ENCODE measurements at regions of chr10 and their contacts with region 1.

Region 1: DNA sequence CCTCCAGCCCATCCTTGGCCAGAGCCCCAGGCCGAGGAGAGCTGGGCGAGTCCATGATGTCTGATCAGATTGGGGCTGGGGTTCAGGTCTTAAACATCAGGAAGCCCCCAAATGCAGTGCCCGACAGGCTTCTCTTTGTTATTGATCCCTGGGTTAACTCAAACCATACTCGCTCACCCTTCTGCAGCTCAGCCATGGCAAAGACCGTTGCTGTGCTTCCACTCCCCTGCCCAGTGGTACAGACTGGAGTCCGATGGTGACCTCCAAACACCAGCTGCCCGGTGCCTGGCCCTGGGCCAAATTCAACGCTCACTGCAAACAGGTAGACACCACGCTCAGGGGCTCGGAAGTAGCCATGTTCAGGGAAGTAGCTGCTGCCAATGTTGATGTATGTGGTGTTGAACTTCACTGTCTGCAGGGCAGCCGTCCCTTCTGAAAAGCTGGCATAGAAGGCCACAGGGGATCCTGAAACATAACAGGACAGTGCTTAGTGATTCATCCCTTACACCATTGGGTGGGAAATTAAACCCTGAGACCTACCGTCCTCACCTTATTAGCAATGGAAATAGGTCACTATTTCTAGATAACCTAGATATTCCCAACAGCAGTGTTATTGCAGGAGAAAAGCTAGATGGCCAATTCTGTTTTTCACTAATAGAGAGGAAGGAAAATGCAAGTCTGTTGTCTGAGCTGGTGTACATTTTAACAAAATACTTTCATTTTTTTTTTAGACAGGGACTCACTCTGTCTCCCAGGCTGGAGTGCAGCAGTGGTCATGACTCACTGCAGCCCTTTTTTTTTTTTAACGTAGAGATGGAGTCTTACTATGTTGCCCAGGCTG is 20.5 kb downstream of the MMRN2 start:
- DNase-seq: no peak
- H3K4me3 ChIP-seq: no peak overlapping the region
- H3K4me3 Mint-ChIP-seq: no peak overlapping the region
- H3K27ac ChIP-seq: no peak overlapping the region
- H3K27ac Mint-ChIP-seq: peak overlapping the region in 3 of 7 donors; percentile 29 to 43 (median 42)
- H3K4me1 ChIP-seq: no peaks in the 10 kb centered on the region
- H3K4me1 Mint-ChIP-seq: peaks cover 0 to 7% (median 3%) of the 10 kb centered on the region in 4 donors
- H3K27me3 ChIP-seq: no peaks in the 10 kb centered on the region
- H3K27me3 Mint-ChIP-seq: no peaks in the 10 kb centered on the region

Region 2: DNA sequence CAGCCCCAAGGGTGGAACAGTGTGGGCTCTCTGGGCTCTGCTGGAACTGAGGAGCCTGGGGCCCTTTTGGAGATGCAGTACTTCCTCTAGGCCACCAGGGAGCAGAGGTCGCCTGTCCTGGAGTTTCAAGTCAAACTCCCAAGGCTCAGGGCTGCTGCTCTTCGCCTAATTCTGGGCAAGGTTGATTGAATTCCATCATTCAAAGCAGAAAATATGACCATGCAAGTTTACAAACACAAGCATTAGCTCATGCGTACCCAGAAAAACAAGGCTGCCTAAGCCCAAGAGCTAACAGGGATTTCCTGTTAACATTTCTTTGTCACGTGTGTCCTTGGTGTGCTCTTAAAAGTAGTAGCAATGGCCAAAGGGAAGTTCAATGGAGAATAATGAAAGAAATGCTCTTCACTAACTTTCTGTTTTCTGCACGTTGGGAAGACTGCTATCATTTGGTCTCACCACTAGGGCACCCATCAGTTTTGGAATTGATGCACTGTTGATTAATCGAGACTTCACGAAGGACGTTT is 248.4 kb before region 1 on chr10:
- CTCF ChIA-PET with region 1: interaction called, 9 read pairs
- POLR2A ChIA-PET with region 1: no interaction called
- intact Hi-C with region 1: loop called (anchors 1 kb)
- DNase-seq: peak; percentile 48 to 55 (median 54)
- H3K4me3 ChIP-seq: no peak overlapping the region
- H3K4me3 Mint-ChIP-seq: peak overlapping the region in 2 of 8 donors; percentile 27 to 48
- H3K27ac ChIP-seq: no peak overlapping the region
- H3K27ac Mint-ChIP-seq: peak overlapping the region in 1 of 7 donors; percentile 6
- H3K4me1 ChIP-seq: no peaks in the 10 kb centered on the region
- H3K4me1 Mint-ChIP-seq: peaks cover 0 to 9% (median 5%) of the 10 kb centered on the region in 4 donors
- H3K27me3 ChIP-seq: no peaks in the 10 kb centered on the region
- H3K27me3 Mint-ChIP-seq: peaks cover 3 to 4% of the 10 kb centered on the region in 2 donors

Region 3: DNA sequence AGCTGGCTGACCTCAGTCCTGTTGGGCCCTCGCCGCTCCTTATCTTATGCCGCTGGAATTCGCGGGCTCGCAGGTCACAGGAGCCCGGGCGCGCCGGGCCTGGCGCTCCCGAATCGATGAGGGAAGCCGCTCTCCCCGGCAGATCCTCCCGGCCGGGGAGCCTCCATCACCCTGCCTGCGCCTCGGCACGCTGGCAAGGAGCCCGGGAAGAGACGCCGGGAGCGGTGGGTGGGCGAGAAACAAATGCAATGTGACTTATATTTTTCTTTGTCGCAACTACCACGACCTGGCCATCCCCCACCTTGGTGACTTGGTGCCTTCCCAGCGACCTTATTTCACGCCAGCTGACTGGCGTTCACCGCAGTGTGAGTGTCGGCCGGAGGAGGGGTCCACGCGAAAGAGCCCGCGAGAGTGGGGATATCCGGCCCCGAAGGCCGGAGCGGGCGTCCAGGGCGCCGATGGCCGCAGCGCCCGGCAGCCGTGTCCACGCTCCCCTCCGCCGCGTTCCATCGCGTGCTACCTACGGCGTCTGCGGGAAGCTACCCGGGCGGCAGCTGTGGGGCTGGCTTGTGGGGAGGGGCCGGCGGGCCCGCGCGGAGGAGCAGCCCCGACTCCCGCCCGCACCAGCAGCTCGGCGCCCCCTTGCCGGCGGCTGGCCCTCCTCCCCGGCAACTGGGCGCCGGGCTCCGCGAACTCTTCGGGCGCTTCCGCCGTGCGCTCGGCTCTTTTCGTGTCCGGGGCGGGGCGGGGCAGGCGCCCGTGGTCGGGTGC is 181.0 kb before region 1 on chr10:
- CTCF ChIA-PET with region 1: interaction called, 11 read pairs
- POLR2A ChIA-PET with region 1: no interaction called
- intact Hi-C with region 1: no loop called
- DNase-seq: peak; percentile 79 to 90 (median 87)
- H3K4me3 ChIP-seq: peak overlapping the region in 1 of 2 donors; percentile 68
- H3K4me3 Mint-ChIP-seq: peak overlapping the region; percentile 85 to 92 (median 90)
- H3K27ac ChIP-seq: peak overlapping the region; percentile 66
- H3K27ac Mint-ChIP-seq: peak overlapping the region in 6 of 7 donors; percentile 73 to 90 (median 86)
- H3K4me1 ChIP-seq: peaks cover 24% of the 10 kb centered on the region
- H3K4me1 Mint-ChIP-seq: peaks cover 25 to 42% (median 33%) of the 10 kb centered on the region in 4 donors
- H3K27me3 ChIP-seq: no peaks in the 10 kb centered on the region
- H3K27me3 Mint-ChIP-seq: no peaks in the 10 kb centered on the region

Region 4: DNA sequence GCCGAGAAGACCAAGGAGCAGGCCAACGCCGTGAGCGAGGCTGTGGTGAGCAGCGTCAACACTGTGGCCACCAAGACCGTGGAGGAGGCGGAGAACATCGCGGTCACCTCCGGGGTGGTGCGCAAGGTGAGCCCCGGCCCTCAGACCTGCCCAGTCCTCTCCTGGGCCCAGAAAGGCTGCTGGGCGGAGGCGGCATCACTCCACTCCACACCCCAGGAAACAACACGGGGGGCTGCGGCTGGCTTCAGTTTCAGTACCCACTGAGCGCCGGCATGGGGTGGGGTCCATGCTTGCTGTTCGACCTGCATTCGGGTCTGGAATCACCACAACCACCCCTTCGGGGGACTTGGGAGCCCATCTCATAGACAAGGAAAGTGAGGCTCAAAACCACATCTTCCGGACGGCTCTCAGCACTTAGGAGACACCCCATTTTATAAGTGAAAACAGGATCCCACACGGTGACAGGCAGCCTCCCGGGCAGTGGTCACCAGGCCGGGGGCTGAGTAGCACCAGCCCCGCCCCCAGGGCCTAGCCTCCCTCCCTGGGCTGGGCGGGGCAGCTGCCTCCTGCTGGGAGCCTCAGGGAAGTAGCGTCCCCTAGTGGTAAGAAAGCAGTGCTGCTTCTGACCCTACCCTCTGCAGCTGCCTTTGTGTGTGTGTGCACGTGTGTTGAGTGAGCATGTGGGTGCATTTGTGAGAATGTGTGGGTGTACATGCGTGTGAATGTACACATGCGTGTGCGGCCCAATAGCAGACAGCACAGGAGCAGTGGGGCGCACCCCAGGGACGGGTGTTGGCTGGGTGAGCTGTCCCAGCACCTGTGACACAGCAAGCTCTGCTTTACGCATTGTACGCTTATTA is 23.4 kb after region 1 on chr10:
- CTCF ChIA-PET with region 1: interaction called, 97 read pairs
- POLR2A ChIA-PET with region 1: interaction called, 4 read pairs
- intact Hi-C with region 1: loop called (anchors 1 kb)
- DNase-seq: peak in 4 of 5 donors; percentile 42 to 57 (median 52)
- H3K4me3 ChIP-seq: no peak overlapping the region
- H3K4me3 Mint-ChIP-seq: no peak overlapping the region
- H3K27ac ChIP-seq: no peak overlapping the region
- H3K27ac Mint-ChIP-seq: peak overlapping the region in 1 of 7 donors; percentile 72
- H3K4me1 ChIP-seq: peaks cover 4% of the 10 kb centered on the region
- H3K4me1 Mint-ChIP-seq: peaks cover 4 to 5% (median 5%) of the 10 kb centered on the region in 4 donors
- H3K27me3 ChIP-seq: no peaks in the 10 kb centered on the region
- H3K27me3 Mint-ChIP-seq: no peaks in the 10 kb centered on the region

Region 5: DNA sequence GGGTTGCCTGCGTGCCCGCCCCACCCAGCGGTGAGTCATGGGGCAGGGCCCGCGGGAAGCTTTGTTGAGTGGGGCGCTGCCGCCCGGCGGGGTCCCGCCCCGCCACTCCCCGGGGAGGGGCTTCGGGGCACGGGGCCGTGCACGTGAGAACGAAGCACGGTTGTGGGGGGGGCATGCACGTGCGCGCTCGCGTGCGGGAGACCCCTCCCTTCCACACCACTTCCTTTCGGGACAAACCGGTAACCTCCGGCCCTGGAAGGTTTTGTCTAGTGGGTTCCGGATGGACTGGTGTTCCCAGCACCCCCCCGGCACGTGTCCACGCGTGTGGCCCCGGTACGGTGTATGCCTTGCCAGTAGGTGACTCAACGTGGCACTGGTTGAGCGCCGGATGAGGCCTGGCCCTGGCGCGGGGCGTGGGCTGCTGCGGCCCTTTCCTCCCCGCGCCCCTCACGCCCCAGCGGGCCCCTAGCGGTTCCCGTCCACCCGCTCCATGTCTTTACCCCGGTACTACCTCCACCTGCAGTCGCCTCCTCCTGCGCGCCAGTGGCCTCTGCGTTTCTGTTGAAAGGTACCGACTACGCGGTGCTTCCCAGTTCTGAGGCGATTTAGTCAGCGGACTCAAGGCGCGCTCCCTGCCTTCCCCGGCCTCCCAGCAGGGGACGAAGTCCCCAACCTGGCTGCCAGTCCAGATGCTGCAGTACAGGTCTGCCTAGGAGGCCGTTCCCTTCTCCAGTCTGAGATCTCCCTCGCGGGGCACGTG is 34.5 kb after region 1 on chr10:
- CTCF ChIA-PET with region 1: interaction called, 97 read pairs
- POLR2A ChIA-PET with region 1: interaction called, 4 read pairs
- intact Hi-C with region 1: loop called (anchors 1 kb)
- DNase-seq: peak; percentile 92 to 96 (median 93)
- H3K4me3 ChIP-seq: peak overlapping the region; percentile 3 to 68
- H3K4me3 Mint-ChIP-seq: peak overlapping the region; percentile 81 to 88 (median 84)
- H3K27ac ChIP-seq: peak overlapping the region; percentile 76
- H3K27ac Mint-ChIP-seq: peak overlapping the region; percentile 90 to 96 (median 93)
- H3K4me1 ChIP-seq: peaks cover 44% of the 10 kb centered on the region
- H3K4me1 Mint-ChIP-seq: peaks cover 19 to 52% (median 31%) of the 10 kb centered on the region in 4 donors
- H3K27me3 ChIP-seq: no peaks in the 10 kb centered on the region
- H3K27me3 Mint-ChIP-seq: peaks cover 0 to 1% of the 10 kb centered on the region in 2 donors

Region 6: DNA sequence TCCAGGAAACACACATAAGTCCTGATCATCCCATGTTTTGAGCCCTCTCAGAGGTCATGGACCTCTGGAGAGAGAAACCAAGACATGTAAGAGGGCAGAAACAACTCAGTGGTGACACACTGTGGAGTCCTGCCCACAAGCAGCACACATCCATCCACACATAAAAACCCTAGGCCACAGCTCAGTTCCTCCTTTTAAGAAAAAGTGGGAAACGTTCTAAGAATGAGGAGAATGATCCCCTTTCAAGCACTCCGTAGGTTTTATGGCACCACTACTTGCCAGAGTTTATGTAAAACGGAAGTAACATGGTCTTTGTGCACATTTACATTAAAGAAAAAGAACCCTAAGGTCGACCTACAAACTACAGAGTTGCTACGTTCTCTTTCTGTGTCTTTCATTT is 861.2 kb after region 1 on chr10:
- CTCF ChIA-PET with region 1: no interaction called
- POLR2A ChIA-PET with region 1: no interaction called
- intact Hi-C with region 1: no loop called
- DNase-seq: no peak
- H3K4me3 ChIP-seq: no peak overlapping the region
- H3K4me3 Mint-ChIP-seq: no peak overlapping the region
- H3K27ac ChIP-seq: no peak overlapping the region
- H3K27ac Mint-ChIP-seq: peak overlapping the region in 1 of 7 donors; percentile 53
- H3K4me1 ChIP-seq: peaks cover 10% of the 10 kb centered on the region
- H3K4me1 Mint-ChIP-seq: peaks cover 30 to 61% (median 40%) of the 10 kb centered on the region in 4 donors
- H3K27me3 ChIP-seq: no peaks in the 10 kb centered on the region
- H3K27me3 Mint-ChIP-seq: no peaks in the 10 kb centered on the region